A673 (cell line): ENCODE measurements at regions of chr1 and their contacts with region 1.

Region 1: GRCh38 chr1:211735208-211736170 is 60.1 kb upstream of the NEK2 start:
- DNase-seq: peak; percentile 67
- H3K4me3 ChIP-seq: no peak overlapping the region
- H3K27ac ChIP-seq: no peak overlapping the region
- H3K4me1 ChIP-seq: peaks cover 23% of the 10 kb centered on the region
- H3K27me3 ChIP-seq: no peaks in the 10 kb centered on the region
- CTCF ChIP-seq: no peak

Region 2: DNA sequence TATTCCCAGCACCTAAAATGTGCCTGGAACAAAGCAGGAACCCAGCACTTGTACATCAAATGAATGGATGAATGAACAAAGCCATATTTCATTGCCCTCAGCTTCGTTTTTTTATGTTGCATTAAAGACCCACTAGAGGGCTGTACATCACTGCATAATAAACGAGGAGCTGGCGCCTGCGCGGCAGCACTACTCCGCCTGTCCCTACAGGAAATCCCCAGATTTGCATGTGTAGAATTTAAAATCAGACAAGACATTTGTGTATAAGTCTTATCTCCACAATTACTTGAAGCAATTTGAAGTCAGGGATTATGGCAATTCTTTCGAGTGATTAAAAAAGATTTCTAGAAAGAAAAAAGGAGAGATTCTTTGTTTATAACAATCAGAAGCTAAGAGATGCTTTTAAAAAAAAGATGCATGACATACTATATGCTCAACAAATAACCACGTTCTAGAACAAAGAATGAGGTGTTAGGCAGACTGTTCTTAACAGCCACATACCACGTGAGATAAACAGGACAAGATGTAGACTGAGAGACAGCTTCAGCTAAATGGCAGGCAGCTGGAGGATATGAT is 54.6 kb before region 1 on chr1:
- CTCF ChIA-PET with region 1: interaction called, 3 read pairs
- POLR2A ChIA-PET with region 1: interaction called, 12 read pairs
- intact Hi-C with region 1: no loop called
- DNase-seq: peak; percentile 92
- H3K4me3 ChIP-seq: no peak overlapping the region
- H3K27ac ChIP-seq: no peak overlapping the region
- H3K4me1 ChIP-seq: peaks cover 5% of the 10 kb centered on the region
- H3K27me3 ChIP-seq: no peaks in the 10 kb centered on the region
- CTCF ChIP-seq: peak; percentile 77